CD14-positive monocyte (primary cell): ENCODE measurements at regions of chr11 and their contacts with region 1.

Region 1: DNA sequence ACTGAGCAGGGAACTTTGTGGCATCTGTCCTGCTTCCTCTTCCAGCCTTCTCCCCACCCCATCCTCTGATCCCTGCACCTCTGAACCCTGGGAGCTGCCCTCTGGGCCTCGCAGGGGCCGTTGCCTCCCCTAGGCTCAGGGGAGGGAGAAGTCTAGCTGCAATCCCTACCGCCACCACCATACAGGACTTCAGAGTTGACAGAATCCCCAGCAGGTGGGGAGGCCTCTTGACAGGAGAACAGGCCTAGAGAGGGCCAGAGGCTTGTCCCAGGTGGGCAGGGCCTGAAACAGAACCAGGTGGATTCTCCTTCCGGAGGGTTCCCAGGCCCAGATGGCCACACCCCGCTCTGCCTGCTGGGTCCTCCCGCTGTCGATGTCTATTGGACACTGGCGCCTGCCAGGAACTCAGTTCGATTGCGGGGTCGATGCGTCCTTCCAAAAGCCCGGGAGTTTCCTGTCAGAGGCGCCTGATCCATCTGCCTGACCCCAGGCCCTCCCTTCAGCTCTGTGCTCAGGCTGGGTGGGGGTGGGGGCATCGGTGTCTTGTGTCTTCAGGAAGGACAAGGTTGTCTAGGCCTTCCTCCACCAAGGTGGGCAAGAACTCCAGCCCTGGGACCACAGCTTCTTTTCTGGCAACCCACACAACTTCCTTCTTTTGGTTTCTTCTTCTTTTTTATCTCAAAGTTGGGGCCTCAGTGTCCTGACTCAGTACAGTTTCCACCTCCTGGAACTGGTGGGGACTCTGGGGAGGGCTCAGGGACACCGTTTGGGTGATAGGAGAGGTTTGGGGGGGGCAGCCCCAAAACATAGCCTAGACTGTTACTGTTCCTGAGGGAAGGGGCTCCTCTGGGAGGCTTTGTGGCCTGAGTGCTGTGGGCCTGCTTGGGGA is 6.4 kb downstream of the STARD10 start:
- DNase-seq: peak in 2 of 3 donors; percentile 69 to 70
- H3K4me3 ChIP-seq: peak overlapping the region in 1 of 3 experiments; percentile 51
- H3K4me3 Mint-ChIP-seq: peak overlapping the region in 1 of 2 donors; percentile 55
- H3K27ac ChIP-seq: peak overlapping the region; percentile 77 to 78
- H3K27ac Mint-ChIP-seq: peak overlapping the region; percentile 89 to 98 (median 91)
- H3K4me1 ChIP-seq: peaks cover 40 to 43% of the 10 kb centered on the region in 2 donors
- H3K4me1 Mint-ChIP-seq: peaks cover 45% of the 10 kb centered on the region
- H3K27me3 ChIP-seq: peaks cover 0 to 4% of the 10 kb centered on the region in 2 donors
- H3K27me3 Mint-ChIP-seq: peaks cover 4 to 5% (median 5%) of the 10 kb centered on the region in 3 donors
- CTCF ChIP-seq: peak; percentile 29

Region 2: GRCh38 chr11:72752088-72752914 is 35.2 kb before region 1 on chr11 and contains the start of gene ARAP1:
- intact Hi-C with region 1: no loop called
- DNase-seq: peak; percentile 69 to 77 (median 71)
- H3K4me3 ChIP-seq: peak within 1 kb of the TSS; percentile 68 to 93 (median 89)
- H3K4me3 Mint-ChIP-seq: peak within 1 kb of the TSS; percentile 91 to 99
- H3K27ac ChIP-seq: peak within 1 kb of the TSS; percentile 62 to 89
- H3K27ac Mint-ChIP-seq: peak within 1 kb of the TSS; percentile 93 to 99 (median 97)
- H3K4me1 ChIP-seq: peaks cover 42 to 52% of the 10 kb centered on the region in 2 donors
- H3K4me1 Mint-ChIP-seq: peaks cover 59% of the 10 kb centered on the region
- H3K27me3 ChIP-seq: no peaks in the 10 kb centered on the region
- H3K27me3 Mint-ChIP-seq: peaks cover 1 to 4% (median 3%) of the 10 kb centered on the region in 3 donors
- CTCF ChIP-seq: no peak
- polyA plus RNA-seq, gene ARAP1: 48.7 to 487 (median 79.0) TPM

Region 3: GRCh38 chr11:72771507-72771906 is 16.0 kb before region 1 on chr11:
- intact Hi-C with region 1: loop called in 1 of 2 experiments (anchors 2 kb)
- DNase-seq: no peak
- H3K4me3 ChIP-seq: no peak overlapping the region
- H3K4me3 Mint-ChIP-seq: no peak overlapping the region
- H3K27ac ChIP-seq: no peak overlapping the region
- H3K27ac Mint-ChIP-seq: no peak overlapping the region
- H3K4me1 ChIP-seq: peaks cover 4 to 7% of the 10 kb centered on the region in 2 donors
- H3K4me1 Mint-ChIP-seq: peaks cover 8% of the 10 kb centered on the region
- H3K27me3 ChIP-seq: no peaks in the 10 kb centered on the region
- H3K27me3 Mint-ChIP-seq: peaks cover 5 to 7% (median 7%) of the 10 kb centered on the region in 3 donors
- CTCF ChIP-seq: no peak

Region 4: GRCh38 chr11:72840780-72841179 is 53.3 kb after region 1 on chr11:
- intact Hi-C with region 1: no loop called
- DNase-seq: no peak
- H3K4me3 ChIP-seq: no peak overlapping the region
- H3K4me3 Mint-ChIP-seq: no peak overlapping the region
- H3K27ac ChIP-seq: no peak overlapping the region
- H3K27ac Mint-ChIP-seq: peak overlapping the region in 1 of 7 donors; percentile 10
- H3K4me1 ChIP-seq: peaks cover 6 to 8% of the 10 kb centered on the region in 2 donors
- H3K4me1 Mint-ChIP-seq: peaks cover 6% of the 10 kb centered on the region
- H3K27me3 ChIP-seq: no peaks in the 10 kb centered on the region
- H3K27me3 Mint-ChIP-seq: peaks cover 0 to 2% (median 1%) of the 10 kb centered on the region in 3 donors
- CTCF ChIP-seq: no peak

Region 5: GRCh38 chr11:72864702-72865655 is 77.5 kb after region 1 on chr11:
- intact Hi-C with region 1: no loop called
- DNase-seq: no peak
- H3K4me3 ChIP-seq: no peak overlapping the region
- H3K4me3 Mint-ChIP-seq: no peak overlapping the region
- H3K27ac ChIP-seq: no peak overlapping the region
- H3K27ac Mint-ChIP-seq: no peak overlapping the region
- H3K4me1 ChIP-seq: no peaks in the 10 kb centered on the region
- H3K4me1 Mint-ChIP-seq: peaks cover 7% of the 10 kb centered on the region
- H3K27me3 ChIP-seq: no peaks in the 10 kb centered on the region
- H3K27me3 Mint-ChIP-seq: peaks cover 0 to 3% (median 2%) of the 10 kb centered on the region in 3 donors
- CTCF ChIP-seq: no peak